IMR-90 (cell line): ENCODE measurements at regions of chr2 and their contacts with region 1.

Region 1: DNA sequence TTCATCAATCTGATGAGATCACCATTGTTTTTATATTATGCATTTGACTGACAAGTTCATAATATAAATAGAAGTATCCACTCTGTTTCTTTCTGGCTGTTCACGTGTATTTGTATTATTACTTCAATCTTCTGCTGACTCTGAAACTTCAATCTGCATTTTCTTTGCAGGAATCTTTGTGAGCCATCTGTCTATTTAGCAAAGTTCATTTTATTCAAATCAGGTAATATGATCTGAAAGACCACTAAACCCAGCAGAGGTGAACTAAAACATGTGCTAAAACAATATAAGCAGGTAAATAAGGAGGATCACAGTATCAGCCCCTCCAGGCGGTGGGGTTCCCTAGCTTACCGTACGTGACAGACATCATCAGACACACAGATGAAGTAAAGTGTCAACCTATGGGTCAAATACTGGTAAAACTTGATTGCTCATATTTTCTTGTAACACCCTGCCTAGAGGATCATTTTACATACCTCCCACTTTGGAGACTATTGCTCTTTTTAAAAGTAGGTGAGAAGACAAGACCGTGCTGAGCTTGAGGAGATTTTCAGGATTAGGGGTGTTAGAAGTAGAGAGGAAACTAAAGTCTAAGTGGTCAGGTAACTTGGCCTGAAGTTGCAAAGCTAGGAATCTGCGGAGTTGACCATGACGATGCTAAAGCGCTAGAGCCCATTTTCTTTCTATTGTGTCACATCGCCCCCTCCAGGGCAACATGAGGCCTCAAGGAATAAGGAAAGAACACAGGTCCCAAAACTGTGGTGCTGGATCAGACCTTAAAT is 9.0 kb downstream of the DTNB start:
- DNase-seq: peak; percentile 74
- ATAC-seq: peak; percentile 98
- H3K4me3 ChIP-seq: no peak overlapping the region
- H3K27ac ChIP-seq: no peak overlapping the region
- H3K4me1 ChIP-seq: no peaks in the 10 kb centered on the region
- H3K27me3 ChIP-seq: no peaks in the 10 kb centered on the region; the same call in 1 of the 2 replicates
- CTCF ChIP-seq: peak; percentile 86
- POLR2A ChIP-seq: 0 out of 2 replicates have a peak, but pooled peaks have one; percentile 24
- RAD21 ChIP-seq: peak; percentile 90

Region 2: DNA sequence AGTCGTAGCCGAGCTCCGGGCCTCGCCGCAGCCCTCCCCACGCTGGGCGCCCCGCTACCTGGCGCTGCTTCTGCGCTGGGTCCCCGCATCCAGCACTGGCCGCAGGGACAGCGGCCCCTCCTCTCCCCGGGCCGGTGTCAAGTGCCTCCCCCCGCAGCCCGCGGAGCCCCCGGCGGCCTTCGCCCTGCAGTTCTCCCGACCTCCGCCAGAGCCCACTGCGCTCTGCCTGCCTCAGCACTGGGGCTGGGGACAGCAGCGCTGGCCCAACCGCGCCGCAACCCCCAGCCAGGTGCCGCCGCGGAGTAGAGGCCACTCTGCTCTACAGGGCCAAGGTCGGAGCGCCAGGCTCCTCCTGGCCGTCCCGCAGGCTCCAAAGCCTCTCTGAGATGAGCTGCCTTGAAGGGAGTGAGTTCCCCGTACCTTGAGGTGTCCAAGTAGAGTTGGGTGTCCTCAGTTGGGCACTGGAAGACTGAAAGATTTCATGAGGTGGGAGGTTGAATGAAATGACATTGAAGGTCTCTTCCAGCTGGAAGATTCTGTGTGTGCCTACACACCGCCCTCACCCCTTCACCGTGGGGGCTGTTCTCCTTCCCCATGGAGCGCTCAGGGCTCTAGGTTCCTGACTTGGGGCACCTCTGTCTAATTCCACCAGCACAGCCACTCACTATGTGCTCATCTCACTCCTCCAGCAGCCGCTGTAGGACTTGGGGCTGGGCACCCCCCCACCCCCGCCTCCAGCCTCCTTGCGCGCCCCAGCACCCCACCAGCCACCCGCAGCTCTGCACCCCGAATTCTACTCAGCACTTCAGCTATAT is 321.8 kb before region 1 on chr2:
- CTCF ChIA-PET with region 1: no interaction called
- POLR2A ChIA-PET with region 1: no interaction called
- dilution Hi-C with region 1: no loop called
- in situ Hi-C with region 1: no loop called
- intact Hi-C with region 1: loop called (anchors 1 kb)
- DNase-seq: peak; percentile 82
- ATAC-seq: peak; percentile 87
- H3K4me3 ChIP-seq: peak overlapping the region; percentile 60
- H3K27ac ChIP-seq: no peak overlapping the region; the same call in 1 of the 2 replicates
- H3K4me1 ChIP-seq: peaks cover 12% of the 10 kb centered on the region; the same call in 1 of the 2 replicates
- H3K27me3 ChIP-seq: no peaks in the 10 kb centered on the region
- CTCF ChIP-seq: peak; percentile 97
- POLR2A ChIP-seq: no peak
- RAD21 ChIP-seq: peak; percentile 72

Region 3: GRCh38 chr2:25521665-25522387 is 142.5 kb before region 1 on chr2:
- CTCF ChIA-PET with region 1: no interaction called
- POLR2A ChIA-PET with region 1: no interaction called
- dilution Hi-C with region 1: no loop called
- in situ Hi-C with region 1: no loop called
- intact Hi-C with region 1: loop called (anchors 2 kb)
- DNase-seq: peak; percentile 81
- ATAC-seq: peak; percentile 93
- H3K4me3 ChIP-seq: peak overlapping the region; percentile 51; the same call in 1 of the 2 replicates
- H3K27ac ChIP-seq: no peak overlapping the region
- H3K4me1 ChIP-seq: no peaks in the 10 kb centered on the region
- H3K27me3 ChIP-seq: no peaks in the 10 kb centered on the region
- CTCF ChIP-seq: peak; percentile 82
- POLR2A ChIP-seq: no peak
- RAD21 ChIP-seq: peak; percentile 74

Region 4: GRCh38 chr2:25606892-25607291 is 57.5 kb before region 1 on chr2:
- CTCF ChIA-PET with region 1: interaction called, 76 read pairs
- POLR2A ChIA-PET with region 1: no interaction called
- dilution Hi-C with region 1: no loop called
- in situ Hi-C with region 1: loop called (anchors 5 kb)
- intact Hi-C with region 1: loop called (anchors 1 kb)
- DNase-seq: peak; percentile 41
- ATAC-seq: no peak
- H3K4me3 ChIP-seq: no peak overlapping the region
- H3K27ac ChIP-seq: no peak overlapping the region
- H3K4me1 ChIP-seq: no peaks in the 10 kb centered on the region
- H3K27me3 ChIP-seq: no peaks in the 10 kb centered on the region
- CTCF ChIP-seq: peak; percentile 75
- POLR2A ChIP-seq: no peak
- RAD21 ChIP-seq: peak; percentile 86

Region 5: DNA sequence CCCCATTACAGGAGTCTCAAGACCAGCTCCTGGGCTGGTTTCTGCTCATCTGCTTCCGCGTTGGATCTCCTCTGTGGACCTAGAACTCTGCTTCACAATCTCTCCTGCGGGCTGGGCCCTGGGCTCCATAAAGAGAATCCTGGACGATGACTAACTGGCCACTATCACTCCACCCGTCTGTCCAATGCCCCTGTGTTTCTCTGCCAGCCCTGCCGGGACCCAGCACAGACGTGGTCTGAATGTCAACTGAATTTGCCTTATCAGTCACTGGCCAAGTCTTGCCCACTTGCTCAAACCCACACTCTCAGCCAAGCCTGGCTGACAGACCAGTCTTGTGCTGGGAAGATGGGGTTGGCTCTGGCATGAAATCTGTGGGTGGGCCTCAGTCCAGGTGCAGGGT is 300.5 kb after region 1 on chr2:
- CTCF ChIA-PET with region 1: no interaction called
- POLR2A ChIA-PET with region 1: no interaction called
- dilution Hi-C with region 1: no loop called
- in situ Hi-C with region 1: no loop called
- intact Hi-C with region 1: no loop called
- DNase-seq: no peak
- ATAC-seq: no peak
- H3K4me3 ChIP-seq: no peak overlapping the region
- H3K27ac ChIP-seq: no peak overlapping the region
- H3K4me1 ChIP-seq: peaks cover 2% of the 10 kb centered on the region
- H3K27me3 ChIP-seq: no peaks in the 10 kb centered on the region
- CTCF ChIP-seq: no peak
- POLR2A ChIP-seq: no peak
- RAD21 ChIP-seq: no peak